Activated CD4-positive, alpha-beta T cell treated with anti-CD3 and anti-CD28 coated beads for 36 hours (primary cell): ENCODE measurements at regions of chr11 and their contacts with region 1.

Region 1: DNA sequence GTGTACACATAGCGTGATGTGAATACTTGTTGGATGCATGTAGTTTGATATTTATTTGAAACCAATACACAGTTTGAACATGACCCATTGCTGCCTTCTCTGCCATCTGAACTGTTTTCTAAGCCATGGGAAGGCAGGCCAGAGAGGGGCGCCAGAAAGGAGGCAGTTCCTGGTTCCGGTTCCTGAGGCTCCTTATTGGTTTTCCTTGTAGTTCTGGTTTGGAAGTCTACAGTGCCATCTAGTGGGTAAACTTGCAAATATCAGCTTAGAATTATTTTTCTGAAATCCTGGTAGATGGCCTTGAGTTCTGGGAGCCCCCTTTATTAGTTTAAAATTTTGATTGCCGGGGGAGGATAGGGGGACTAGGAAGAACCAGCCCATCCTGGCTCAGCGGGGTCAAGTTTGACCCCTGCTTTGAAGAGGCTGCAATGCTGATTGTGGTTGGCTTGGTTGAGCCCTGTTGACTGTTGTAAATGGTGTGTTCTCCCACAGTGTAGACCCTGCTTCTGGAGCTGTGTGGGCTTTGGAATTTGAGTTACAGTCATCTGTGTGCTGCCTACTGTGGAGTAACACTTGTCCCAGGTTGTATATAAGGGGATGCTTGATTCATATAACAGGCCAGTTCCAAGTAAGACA is 48.4 kb downstream of the GRAMD1B start:
- DNase-seq: peak; percentile 40
- ATAC-seq: peak; percentile 22
- H3K4me3 Mint-ChIP-seq: no peak overlapping the region
- H3K27ac Mint-ChIP-seq: peak overlapping the region; percentile 32
- H3K4me1 Mint-ChIP-seq: peaks cover 36% of the 10 kb centered on the region
- H3K27me3 Mint-ChIP-seq: no peaks in the 10 kb centered on the region

Region 2: DNA sequence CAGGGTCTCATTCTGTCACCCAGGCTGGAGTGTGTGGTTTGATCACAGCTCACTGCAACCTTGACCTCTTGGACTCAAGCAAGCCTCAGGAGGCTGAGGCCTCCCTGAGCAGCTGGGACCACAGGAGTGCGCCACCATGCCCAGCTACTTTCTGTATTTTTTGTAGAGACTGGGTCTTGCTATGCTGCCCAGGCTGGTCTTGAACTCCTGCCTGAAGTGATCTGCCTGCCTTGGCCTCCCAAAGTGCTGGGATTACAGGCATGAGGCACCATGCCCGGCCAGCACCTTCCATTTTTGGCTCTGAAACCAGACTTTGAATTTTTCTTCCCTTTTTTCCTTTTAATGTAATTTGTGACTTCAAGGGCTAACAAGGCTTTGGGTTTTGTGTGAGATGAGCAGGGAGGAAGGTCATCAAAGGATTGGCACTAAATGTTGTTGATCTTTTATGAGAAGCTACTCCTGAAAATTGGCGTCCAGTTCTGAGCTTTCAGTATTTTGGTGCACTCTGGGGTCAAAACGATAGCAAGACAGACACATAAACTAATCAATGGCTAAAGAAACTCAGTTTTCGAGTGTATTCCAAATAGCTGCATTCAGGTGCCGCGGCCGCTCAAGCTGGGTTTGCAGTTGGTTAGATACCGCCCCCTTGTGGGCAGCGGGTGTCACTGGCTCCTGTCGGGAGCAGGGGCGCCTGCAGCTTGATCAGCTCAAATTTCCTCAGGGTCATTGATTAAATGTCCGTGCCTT is 231.5 kb before region 1 on chr11:
- CTCF ChIA-PET with region 1: interaction called, 19 read pairs
- POLR2A ChIA-PET with region 1: interaction called, 3 read pairs
- intact Hi-C with region 1: loop called in 1 of 2 experiments (anchors 1 kb)
- DNase-seq: peak; percentile 93
- ATAC-seq: peak; percentile 96
- H3K4me3 Mint-ChIP-seq: no peak overlapping the region
- H3K27ac Mint-ChIP-seq: no peak overlapping the region
- H3K4me1 Mint-ChIP-seq: peaks cover 4% of the 10 kb centered on the region
- H3K27me3 Mint-ChIP-seq: peaks cover 5% of the 10 kb centered on the region

Region 3: DNA sequence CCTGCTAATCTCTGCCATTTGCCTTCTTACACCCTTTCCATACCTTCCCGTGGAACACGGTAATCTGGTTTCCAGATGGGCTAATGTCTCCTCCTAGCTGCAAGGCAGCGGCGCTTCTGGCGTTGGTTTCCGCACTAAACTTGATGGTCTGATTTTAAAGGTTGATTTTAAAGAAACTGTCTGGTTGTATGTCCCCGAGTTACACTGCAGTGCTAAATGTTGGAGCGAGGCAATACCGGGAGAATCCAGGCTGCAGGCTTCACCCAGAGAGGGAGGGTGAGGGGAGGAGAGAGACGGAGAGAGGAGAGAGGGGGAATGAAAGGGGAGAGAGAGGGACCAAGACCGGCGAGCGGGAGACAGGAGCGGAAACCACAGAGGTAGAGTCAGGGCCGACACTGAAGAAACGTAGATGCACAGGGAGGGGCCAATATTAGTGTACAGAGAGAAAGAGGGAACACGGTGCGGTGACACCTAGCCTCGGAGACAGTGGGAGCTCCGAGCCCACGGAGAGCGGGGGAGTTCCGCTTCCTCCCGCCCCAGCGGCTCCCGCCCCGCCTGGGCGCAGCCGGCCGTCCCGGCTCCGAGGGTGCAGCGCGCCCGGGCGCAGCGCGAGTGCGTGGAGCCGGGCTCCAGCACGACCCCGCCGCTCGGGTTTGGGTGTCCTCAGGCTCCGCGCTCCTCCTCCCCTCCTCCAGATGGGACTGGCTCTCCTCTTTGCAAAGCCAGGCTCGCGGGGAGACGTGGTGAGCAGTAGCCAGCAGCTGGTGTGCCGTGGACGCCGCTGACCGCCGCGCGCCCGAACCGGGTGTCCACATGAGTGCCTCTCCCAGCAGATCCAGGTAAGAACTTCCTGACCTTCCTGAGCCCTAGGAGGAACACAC is 120.3 kb before region 1 on chr11:
- CTCF ChIA-PET with region 1: interaction called, 3 read pairs
- POLR2A ChIA-PET with region 1: no interaction called
- intact Hi-C with region 1: loop called (anchors 5 kb)
- DNase-seq: peak; percentile 71
- ATAC-seq: peak; percentile 77
- H3K4me3 Mint-ChIP-seq: peak overlapping the region; percentile 78
- H3K27ac Mint-ChIP-seq: peak overlapping the region; percentile 74
- H3K4me1 Mint-ChIP-seq: peaks cover 49% of the 10 kb centered on the region
- H3K27me3 Mint-ChIP-seq: peaks cover 38% of the 10 kb centered on the region

Region 4: GRCh38 chr11:123407130-123407995 is 71.1 kb before region 1 on chr11:
- CTCF ChIA-PET with region 1: interaction called, 83 read pairs
- POLR2A ChIA-PET with region 1: interaction called, 3 read pairs
- intact Hi-C with region 1: loop called (anchors 1 kb)
- DNase-seq: peak; percentile 79
- ATAC-seq: peak; percentile 74
- H3K4me3 Mint-ChIP-seq: peak overlapping the region; percentile 33
- H3K27ac Mint-ChIP-seq: peak overlapping the region; percentile 63
- H3K4me1 Mint-ChIP-seq: peaks cover 26% of the 10 kb centered on the region
- H3K27me3 Mint-ChIP-seq: peaks cover 5% of the 10 kb centered on the region

Region 5: DNA sequence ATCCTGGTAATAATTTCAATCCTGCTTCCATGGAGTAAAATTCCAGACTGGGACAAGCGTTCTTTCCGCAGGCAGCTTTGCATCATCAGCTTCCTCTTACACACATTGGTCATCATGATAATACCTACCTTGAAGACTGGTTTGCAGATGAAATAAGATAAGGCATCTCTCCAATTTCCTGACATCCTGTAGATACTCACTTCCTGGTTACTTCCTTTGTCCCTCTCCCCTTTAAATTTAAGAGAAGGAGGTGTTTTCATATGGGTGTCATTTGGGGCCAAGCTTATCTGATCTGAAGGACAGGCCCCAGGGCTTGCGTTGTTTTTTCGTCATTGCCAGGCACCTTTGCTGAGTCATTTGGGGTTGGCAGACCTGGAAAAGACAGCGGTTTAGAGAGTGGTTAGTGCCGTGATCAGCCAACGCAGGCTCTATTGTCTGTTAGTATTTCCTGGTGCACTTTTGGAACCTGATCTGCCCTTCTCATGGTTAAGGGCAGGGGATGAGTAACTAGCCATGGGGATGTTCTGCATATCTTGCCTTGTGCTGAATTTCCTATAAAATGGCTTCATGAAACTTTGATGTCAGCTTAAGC is 24.3 kb before region 1 on chr11:
- CTCF ChIA-PET with region 1: interaction called, 6 read pairs
- POLR2A ChIA-PET with region 1: no interaction called
- intact Hi-C with region 1: loop called (anchors 1 to 2 kb)
- DNase-seq: peak; percentile 88
- ATAC-seq: peak; percentile 87
- H3K4me3 Mint-ChIP-seq: peak overlapping the region; percentile 69
- H3K27ac Mint-ChIP-seq: peak overlapping the region; percentile 94
- H3K4me1 Mint-ChIP-seq: peaks cover 78% of the 10 kb centered on the region
- H3K27me3 Mint-ChIP-seq: no peaks in the 10 kb centered on the region